MCF 10A (cell line): ENCODE measurements at regions of chr12 and their contacts with region 1.

Region 1: GRCh38 chr12:101773650-101774162 is 34.4 kb upstream of the SYCP3 start:
- DNase-seq: peak; percentile 76
- H3K4me3 Mint-ChIP-seq: no peak overlapping the region
- H3K27ac Mint-ChIP-seq: peak overlapping the region; percentile 55
- H3K4me1 Mint-ChIP-seq: no peaks in the 10 kb centered on the region
- H3K27me3 Mint-ChIP-seq: no peaks in the 10 kb centered on the region
- CTCF ChIP-seq: peak; percentile 94

Region 2: DNA sequence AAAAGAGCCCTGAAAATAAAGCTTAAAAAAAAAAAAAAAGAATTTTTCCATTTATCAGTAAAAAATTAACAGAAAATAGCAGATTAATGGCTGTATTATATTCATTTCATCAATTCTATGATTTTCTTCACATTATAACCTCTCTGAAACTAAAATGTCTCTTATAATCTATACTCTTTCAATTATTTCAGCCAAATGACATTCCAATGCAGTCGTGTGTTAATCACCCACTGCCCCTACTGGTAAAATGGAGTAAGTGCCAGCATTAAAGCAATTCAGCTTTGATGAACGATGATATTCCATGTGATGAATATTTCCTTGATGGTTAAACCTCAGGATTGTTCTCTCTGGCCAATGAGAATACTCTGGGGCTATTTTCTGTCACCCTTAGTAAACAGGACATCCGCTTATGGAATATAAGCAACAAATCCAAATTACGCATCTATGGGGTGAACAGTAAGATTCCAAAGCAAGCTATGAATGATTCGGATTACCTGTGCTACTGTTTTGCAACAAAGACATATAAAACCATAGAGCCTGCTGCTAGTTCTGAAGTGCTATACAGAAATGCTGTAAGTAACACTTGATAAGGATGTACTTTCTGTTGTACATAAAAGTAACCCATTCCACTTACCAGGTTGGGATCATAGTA is 14.2 kb before region 1 on chr12:
- CTCF ChIA-PET with region 1: interaction called, 28 read pairs
- POLR2A ChIA-PET with region 1: no interaction called
- intact Hi-C with region 1: no loop called
- DNase-seq: peak; percentile 61
- H3K4me3 Mint-ChIP-seq: no peak overlapping the region
- H3K27ac Mint-ChIP-seq: no peak overlapping the region
- H3K4me1 Mint-ChIP-seq: no peaks in the 10 kb centered on the region
- H3K27me3 Mint-ChIP-seq: no peaks in the 10 kb centered on the region
- CTCF ChIP-seq: peak; percentile 65

Region 3: GRCh38 chr12:101823891-101824290 is 50.2 kb after region 1 on chr12:
- CTCF ChIA-PET with region 1: interaction called, 71 read pairs
- POLR2A ChIA-PET with region 1: interaction called, 3 read pairs
- intact Hi-C with region 1: no loop called
- DNase-seq: peak; percentile 65
- H3K4me3 Mint-ChIP-seq: no peak overlapping the region
- H3K27ac Mint-ChIP-seq: no peak overlapping the region
- H3K4me1 Mint-ChIP-seq: peaks cover 8% of the 10 kb centered on the region
- H3K27me3 Mint-ChIP-seq: no peaks in the 10 kb centered on the region
- CTCF ChIP-seq: no peak

Region 4: DNA sequence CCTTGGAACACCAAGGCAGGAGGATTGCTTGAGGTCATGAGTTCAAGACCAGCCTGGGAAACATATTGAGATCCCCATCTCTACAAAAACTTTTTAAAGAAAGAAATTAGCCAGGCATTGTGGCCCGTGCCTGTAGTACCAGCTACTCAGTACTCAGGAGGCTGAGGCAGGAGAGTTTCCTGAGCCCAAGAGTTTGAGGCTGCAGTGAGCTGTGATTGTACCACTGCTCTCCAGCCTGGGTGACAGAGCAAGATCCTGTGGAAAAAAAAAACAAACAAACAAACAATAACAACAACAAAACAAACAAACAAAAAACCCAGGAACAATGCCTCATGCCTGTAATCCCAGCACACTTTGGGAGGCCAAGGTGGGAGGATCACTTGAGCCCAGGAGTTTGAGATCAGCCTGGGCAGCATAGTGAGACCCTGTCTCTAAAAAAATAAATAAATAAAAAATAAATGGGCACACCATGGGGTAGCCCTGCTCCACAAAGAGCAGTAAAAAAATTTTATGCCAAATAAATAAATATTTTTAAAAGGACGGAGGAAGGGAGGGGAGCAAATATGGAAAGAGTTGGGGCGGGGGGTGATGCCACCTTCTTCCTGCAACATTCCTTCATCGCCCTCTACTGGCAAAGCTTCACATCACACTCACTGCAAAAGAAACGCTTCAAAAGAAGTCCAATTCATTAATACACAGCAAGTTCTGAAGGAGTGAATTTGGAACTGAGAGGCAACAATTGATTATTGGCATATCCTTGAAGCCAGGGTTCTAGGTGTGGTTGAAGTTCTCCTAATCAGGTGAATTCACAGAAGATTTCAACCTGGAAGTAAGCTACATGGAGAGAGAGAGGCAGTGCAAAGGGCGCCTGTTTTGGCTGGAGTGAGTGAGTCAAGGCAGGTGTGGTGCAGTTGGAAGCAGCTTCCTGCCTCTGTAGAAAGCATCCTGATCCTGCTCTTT is 65.9 kb after region 1 on chr12:
- CTCF ChIA-PET with region 1: interaction called, 73 read pairs
- POLR2A ChIA-PET with region 1: interaction called, 3 read pairs
- intact Hi-C with region 1: loop called (anchors 1 kb)
- DNase-seq: peak; percentile 70
- H3K4me3 Mint-ChIP-seq: no peak overlapping the region
- H3K27ac Mint-ChIP-seq: no peak overlapping the region
- H3K4me1 Mint-ChIP-seq: no peaks in the 10 kb centered on the region
- H3K27me3 Mint-ChIP-seq: no peaks in the 10 kb centered on the region
- CTCF ChIP-seq: peak; percentile 83

Region 5: DNA sequence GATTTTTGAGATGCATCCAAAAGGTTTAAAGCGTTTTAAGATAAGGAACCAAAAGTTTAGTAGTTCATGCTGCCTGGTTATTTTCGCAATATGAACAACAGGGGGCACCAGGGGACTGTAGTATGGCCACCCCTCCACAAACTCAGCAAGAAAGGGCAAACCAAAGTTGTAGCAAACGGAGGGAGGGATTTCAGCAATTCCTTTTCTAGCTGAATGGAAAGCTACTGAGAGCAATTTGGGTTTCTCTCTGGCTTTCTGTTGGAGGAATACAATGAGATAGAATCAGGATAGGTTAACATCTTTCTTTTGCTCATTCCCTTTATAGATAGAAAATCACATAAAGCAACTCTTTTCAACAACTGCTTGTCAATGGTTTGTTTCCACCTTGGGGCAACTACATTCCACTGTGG is 166.2 kb after region 1 on chr12:
- CTCF ChIA-PET with region 1: no interaction called
- POLR2A ChIA-PET with region 1: no interaction called
- intact Hi-C with region 1: loop called (anchors 1 kb)
- DNase-seq: peak; percentile 81
- H3K4me3 Mint-ChIP-seq: no peak overlapping the region
- H3K27ac Mint-ChIP-seq: no peak overlapping the region
- H3K4me1 Mint-ChIP-seq: peaks cover 23% of the 10 kb centered on the region
- H3K27me3 Mint-ChIP-seq: no peaks in the 10 kb centered on the region
- CTCF ChIP-seq: peak; percentile 77